Vagina (tissue), 2 donors: ENCODE measurements at regions of chr2 and their contacts with region 1.

Region 1: DNA sequence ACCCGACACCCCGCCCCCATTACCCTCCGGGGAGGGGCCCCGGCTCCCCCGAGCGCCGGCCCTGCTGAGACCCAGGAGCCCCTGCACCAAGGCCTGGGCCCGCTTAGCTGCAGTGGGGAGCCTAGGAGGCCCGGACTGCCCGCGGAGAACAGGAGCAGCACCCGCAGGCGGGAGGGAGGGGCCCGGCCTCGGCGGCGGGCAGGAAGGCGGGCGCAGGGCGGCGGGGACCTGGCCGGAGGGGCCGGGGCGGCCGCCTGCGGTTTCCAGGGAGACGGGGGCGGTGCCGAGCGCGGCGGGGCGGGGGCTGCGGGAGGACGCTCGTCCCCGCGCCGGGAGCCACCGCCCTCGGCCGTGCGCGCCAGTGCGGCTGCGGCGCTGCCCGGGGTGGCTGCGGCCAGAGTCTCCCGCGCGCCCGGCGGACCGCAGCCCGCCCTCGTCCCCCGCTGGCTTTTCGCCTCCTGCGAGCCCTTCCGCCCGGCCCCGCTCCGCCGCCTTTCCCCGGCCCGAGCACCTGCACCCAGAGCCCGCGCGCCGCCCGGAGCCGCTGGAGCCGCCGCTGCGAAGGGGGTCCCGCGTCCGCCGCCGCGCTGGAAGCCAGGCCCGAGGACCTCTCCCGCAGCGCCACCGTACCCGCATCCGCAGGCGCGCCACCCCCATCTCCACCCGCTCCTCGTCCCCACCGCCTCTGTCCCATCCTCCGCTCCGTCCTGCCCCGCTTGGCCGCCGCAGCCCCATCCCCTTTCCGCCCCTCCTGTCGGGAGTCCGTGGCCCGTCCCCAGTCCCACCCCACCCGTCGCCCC is 17.2 kb downstream of the GPC1 start:
- DNase-seq: no peak
- H3K4me3 ChIP-seq: peak overlapping the region; percentile 64 to 86
- H3K27ac ChIP-seq: peak overlapping the region; percentile 81
- H3K4me1 ChIP-seq: peaks cover 86% of the 10 kb centered on the region
- H3K27me3 ChIP-seq: no peaks in the 10 kb centered on the region
- CTCF ChIP-seq: no peak
- POLR2A ChIP-seq: peak in 1 of 2 donors; percentile 45

Region 2: DNA sequence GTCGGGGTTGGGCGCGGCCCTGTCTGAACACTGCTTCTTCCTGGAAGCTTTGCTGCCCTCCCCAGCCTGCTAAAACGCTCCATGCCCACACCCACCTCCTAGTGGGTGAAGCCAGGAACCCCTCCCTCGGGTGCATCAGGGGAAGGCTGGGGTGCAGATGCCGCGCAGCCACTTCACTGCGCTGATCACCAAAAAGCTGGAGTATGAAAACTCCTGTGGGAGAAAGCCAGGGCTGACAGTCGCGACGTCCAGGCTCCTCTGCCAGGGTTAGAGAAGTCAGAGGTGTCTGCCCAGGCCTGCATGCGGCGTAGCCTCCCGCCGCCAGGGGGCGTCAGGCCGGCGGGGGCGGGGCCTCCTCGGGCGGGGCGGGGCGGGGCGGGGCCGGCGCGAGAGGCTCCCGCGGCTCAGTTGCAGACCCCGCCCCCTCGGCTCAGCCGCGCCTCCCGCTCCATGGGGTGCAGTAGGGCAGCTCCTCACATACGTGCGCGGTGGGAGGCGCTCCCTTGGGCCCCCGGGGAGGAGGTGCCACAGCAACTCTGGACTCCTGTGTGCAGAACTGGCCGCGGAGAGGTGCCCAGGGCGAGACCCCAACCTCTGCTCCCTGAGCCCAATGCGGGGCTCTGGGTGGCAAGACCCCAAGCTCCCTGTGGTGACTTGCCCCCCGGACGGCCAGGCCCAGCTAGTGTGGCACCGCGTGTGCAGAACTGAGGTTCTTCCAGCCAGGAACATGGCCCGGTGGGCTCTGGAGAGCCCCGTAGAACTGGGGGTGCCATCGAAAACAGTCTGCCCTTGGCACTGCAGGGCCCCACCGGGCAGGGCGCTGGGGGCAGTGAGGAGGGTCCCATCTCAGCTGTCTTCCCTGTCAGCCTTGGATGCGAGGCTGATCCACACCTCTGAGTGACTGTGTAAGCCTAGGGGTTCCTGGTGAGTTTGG is 113.8 kb after region 1 on chr2:
- intact Hi-C with region 1: loop called (anchors 5 kb)
- DNase-seq: no peak
- H3K4me3 ChIP-seq: peak overlapping the region; percentile 71 to 76
- H3K27ac ChIP-seq: peak overlapping the region; percentile 93
- H3K4me1 ChIP-seq: peaks cover 64% of the 10 kb centered on the region
- H3K27me3 ChIP-seq: no peaks in the 10 kb centered on the region
- CTCF ChIP-seq: peak in 2 of 3 experiments; percentile 56 to 98
- POLR2A ChIP-seq: peak in 1 of 2 donors; percentile 58